Endothelial cell of umbilical vein (primary cell): ENCODE measurements at regions of chr19 and their contacts with region 1.

Region 1: GRCh38 chr19:17052439-17053210 is 22.6 kb downstream of the HAUS8 start:
- DNase-seq: peak; percentile 55
- H3K4me3 ChIP-seq: no peak overlapping the region
- H3K27ac ChIP-seq: no peak overlapping the region
- H3K4me1 ChIP-seq: no peaks in the 10 kb centered on the region
- H3K27me3 ChIP-seq: no peaks in the 10 kb centered on the region
- CTCF ChIP-seq: peak; percentile 52 to 68
- POLR2A ChIP-seq: no peak

Region 2: DNA sequence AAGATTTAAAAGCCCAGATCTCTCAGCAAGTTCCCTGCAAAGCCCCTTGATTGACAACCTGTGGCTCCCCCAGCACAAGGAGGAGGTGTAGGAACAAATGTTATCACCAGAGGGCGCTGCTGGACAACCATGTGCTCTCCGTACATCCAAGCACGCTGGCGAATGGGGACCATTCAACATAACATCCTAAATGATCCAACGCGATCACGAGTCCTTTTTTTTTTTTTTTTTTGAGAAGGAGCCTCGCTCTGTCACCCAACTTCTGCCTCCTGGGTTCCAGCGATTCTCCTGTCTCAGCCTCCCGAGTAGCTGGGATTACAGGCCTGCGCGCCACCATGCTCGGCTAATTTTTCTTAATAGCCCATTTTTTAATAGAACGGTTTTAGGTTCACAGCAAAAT is 281.0 kb before region 1 on chr19:
- CTCF ChIA-PET with region 1: interaction called, 148 read pairs
- POLR2A ChIA-PET with region 1: no interaction called
- dilution Hi-C with region 1: no loop called
- intact Hi-C with region 1: loop called (anchors 1 kb)
- DNase-seq: peak; percentile 81
- H3K4me3 ChIP-seq: no peak overlapping the region
- H3K27ac ChIP-seq: no peak overlapping the region
- H3K4me1 ChIP-seq: no peaks in the 10 kb centered on the region
- H3K27me3 ChIP-seq: no peaks in the 10 kb centered on the region
- CTCF ChIP-seq: peak; percentile 73 to 79
- POLR2A ChIP-seq: no peak

Region 3: GRCh38 chr19:16778796-16779411 is 273.7 kb before region 1 on chr19:
- CTCF ChIA-PET with region 1: interaction called, 148 read pairs
- POLR2A ChIA-PET with region 1: no interaction called
- dilution Hi-C with region 1: no loop called
- intact Hi-C with region 1: loop called (anchors 2 kb)
- DNase-seq: peak; percentile 59
- H3K4me3 ChIP-seq: no peak overlapping the region
- H3K27ac ChIP-seq: no peak overlapping the region
- H3K4me1 ChIP-seq: no peaks in the 10 kb centered on the region
- H3K27me3 ChIP-seq: peaks cover 1 to 6% of the 10 kb centered on the region in 2 experiments
- CTCF ChIP-seq: peak; percentile 59 to 80
- POLR2A ChIP-seq: no peak

Region 4: GRCh38 chr19:17041976-17042375 is 10.6 kb before region 1 on chr19:
- CTCF ChIA-PET with region 1: interaction called, 14 read pairs
- POLR2A ChIA-PET with region 1: no interaction called
- dilution Hi-C with region 1: no loop called
- intact Hi-C with region 1: no loop called
- DNase-seq: peak; percentile 55
- H3K4me3 ChIP-seq: no peak overlapping the region
- H3K27ac ChIP-seq: no peak overlapping the region
- H3K4me1 ChIP-seq: no peaks in the 10 kb centered on the region
- H3K27me3 ChIP-seq: peaks cover 2 to 3% of the 10 kb centered on the region in 2 experiments
- CTCF ChIP-seq: no peak
- POLR2A ChIP-seq: no peak

Region 5: DNA sequence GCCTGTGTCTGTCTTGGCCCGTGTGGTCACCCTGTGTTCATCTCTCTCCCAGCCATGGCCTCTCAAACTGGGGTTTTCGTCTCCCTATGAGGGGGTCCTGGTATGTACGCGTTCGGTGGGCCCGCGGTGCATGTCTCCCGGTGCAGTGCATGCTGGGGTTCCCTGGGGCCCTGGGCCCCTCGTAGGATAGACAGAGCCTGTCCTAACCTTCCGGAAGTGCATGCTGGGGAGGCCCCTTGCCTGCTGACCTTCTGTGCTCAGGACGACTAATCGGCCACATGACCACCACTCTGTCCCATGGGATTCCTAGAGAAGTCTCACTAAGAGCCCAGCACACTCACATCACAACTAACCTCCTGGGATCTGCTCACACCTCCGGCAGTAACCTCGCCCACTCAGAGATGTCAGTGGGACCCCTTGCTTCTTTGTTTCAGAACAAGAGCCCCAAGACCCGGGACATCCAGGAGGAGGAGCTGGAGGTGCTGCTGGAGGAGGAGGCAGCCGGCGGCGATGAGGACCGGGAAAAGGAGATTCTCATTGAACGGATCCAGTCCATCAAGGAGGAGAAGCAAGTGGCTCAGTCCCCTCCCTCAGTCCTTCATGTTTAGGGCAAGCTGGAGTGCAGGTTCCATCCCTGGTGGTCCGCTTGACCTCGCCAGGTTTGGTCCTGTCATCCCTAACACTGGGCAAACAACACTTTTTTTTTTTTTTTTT is 157.8 kb after region 1 on chr19:
- CTCF ChIA-PET with region 1: no interaction called
- POLR2A ChIA-PET with region 1: no interaction called
- dilution Hi-C with region 1: no loop called
- intact Hi-C with region 1: no loop called
- DNase-seq: no peak
- H3K4me3 ChIP-seq: no peak overlapping the region
- H3K27ac ChIP-seq: no peak overlapping the region
- H3K4me1 ChIP-seq: peaks cover 13% of the 10 kb centered on the region
- H3K27me3 ChIP-seq: no peaks in the 10 kb centered on the region
- CTCF ChIP-seq: no peak
- POLR2A ChIP-seq: no peak